Aorta (tissue), 5 donors: ENCODE measurements at regions of chr15 and their contacts with region 1.

Region 1: GRCh38 chr15:43440721-43441281 is 52.2 kb downstream of the TP53BP1 start:
- DNase-seq: peak in 1 of 2 donors; percentile 48
- ATAC-seq: peak; percentile 93
- H3K4me3 ChIP-seq: no peak overlapping the region
- H3K27ac ChIP-seq: peak overlapping the region in 1 of 2 donors; percentile 70
- H3K4me1 ChIP-seq: no peaks in the 10 kb centered on the region
- H3K27me3 ChIP-seq: no peaks in the 10 kb centered on the region

Region 2: DNA sequence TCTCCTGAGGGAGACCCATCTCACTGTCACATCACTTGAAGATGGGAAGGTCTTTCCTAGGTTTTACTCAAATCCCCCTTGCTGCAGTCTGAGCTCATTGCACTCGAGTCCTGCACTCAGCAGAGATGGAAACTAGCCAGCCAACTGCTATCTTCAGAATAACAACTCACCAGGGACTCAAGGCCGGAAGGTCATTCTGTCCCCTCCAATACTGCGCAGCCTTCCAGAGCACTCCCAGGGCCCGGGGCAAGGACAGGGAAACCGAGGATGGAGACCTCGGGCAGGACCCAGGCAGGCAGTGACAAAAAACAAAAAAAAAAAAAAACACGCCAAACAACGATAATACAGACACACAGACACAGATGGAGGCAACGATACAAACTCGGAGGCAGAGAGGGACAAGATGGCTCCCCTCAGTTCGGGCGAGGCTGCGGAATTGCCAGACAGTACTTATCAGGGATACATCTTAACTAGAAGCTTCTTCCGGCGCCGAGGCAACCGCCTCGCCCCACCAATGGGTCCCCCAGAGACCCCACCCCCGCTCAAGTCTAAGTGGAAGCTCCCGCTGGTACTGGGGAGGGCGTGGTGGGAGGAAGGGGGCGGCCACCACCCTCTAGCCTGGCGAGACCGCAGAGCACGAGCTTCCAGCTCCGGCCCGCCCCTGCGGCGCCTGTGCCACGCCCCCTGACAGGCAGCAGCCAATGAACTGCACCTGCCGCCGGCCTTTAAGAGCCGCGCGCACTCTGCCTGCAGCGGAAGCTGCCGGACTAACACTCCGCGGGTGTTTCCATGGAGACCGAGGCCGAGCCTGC is 69.6 kb after region 1 on chr15:
- intact Hi-C with region 1: loop called in 1 of 2 experiments (anchors 10 kb)
- DNase-seq: peak; percentile 99 to 100
- ATAC-seq: peak; percentile 99
- H3K4me3 ChIP-seq: peak overlapping the region; percentile 48 to 79
- H3K27ac ChIP-seq: peak overlapping the region in 1 of 2 donors; percentile 62
- H3K4me1 ChIP-seq: peaks cover 2 to 3% of the 10 kb centered on the region in 2 donors
- H3K27me3 ChIP-seq: no peaks in the 10 kb centered on the region